ENCODE measurements at regions of chr10 and their contacts with region 1.

Region 1: GRCh38 chr10:100433253-100434240 is 29.3 kb upstream of the WNT8B start:
- DNase-seq: peak; percentile 98
- ATAC-seq: peak; percentile 98
- H3K4me3 Mint-ChIP-seq: peak overlapping the region; percentile 7
- H3K27ac Mint-ChIP-seq: no peak overlapping the region
- H3K4me1 Mint-ChIP-seq: peaks cover 5% of the 10 kb centered on the region
- H3K27me3 Mint-ChIP-seq: peaks cover 2% of the 10 kb centered on the region

Region 2: DNA sequence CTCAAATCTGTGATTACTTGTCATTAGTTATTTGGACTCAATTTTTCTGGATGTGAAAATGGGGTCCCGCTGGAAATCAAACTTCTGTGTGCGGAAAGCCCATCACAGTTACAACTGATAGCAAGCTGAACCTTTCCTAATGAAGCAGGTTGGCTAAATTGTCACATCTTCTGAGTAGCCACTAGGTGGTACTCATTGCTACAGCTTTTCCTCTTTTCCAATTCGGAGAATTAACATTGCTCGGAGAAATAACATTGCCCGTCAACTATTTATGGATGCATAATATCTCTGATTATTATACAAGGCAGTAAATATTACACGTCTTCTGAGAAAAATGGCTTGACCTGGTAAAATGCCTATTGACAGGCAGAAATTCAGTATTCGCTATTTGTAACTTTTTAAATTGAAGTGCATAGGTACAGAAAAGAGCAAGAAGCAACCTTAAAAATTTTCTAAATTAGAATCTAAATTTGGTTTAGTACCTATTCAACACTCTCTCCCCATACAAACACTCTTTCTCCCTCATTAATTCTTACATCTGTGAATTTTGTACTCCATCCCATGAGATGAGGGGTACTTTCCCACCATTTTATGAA is 129.7 kb before region 1 on chr10:
- CTCF ChIA-PET with region 1: interaction called, 6 read pairs
- POLR2A ChIA-PET with region 1: no interaction called
- intact Hi-C with region 1: loop called in 1 of 2 experiments (anchors 1 kb)
- DNase-seq: no peak
- ATAC-seq: no peak
- H3K4me3 Mint-ChIP-seq: no peak overlapping the region
- H3K27ac Mint-ChIP-seq: no peak overlapping the region
- H3K4me1 Mint-ChIP-seq: no peaks in the 10 kb centered on the region
- H3K27me3 Mint-ChIP-seq: peaks cover 41% of the 10 kb centered on the region

Region 3: GRCh38 chr10:100338434-100339036 is 95.0 kb before region 1 on chr10:
- CTCF ChIA-PET with region 1: interaction called, 236 read pairs
- POLR2A ChIA-PET with region 1: no interaction called
- intact Hi-C with region 1: loop called (anchors 1 kb)
- DNase-seq: peak; percentile 90
- ATAC-seq: peak; percentile 85
- H3K4me3 Mint-ChIP-seq: no peak overlapping the region
- H3K27ac Mint-ChIP-seq: no peak overlapping the region
- H3K4me1 Mint-ChIP-seq: no peaks in the 10 kb centered on the region
- H3K27me3 Mint-ChIP-seq: no peaks in the 10 kb centered on the region